ENCODE measurements at regions of chr6 and their contacts with region 1.

Region 1: DNA sequence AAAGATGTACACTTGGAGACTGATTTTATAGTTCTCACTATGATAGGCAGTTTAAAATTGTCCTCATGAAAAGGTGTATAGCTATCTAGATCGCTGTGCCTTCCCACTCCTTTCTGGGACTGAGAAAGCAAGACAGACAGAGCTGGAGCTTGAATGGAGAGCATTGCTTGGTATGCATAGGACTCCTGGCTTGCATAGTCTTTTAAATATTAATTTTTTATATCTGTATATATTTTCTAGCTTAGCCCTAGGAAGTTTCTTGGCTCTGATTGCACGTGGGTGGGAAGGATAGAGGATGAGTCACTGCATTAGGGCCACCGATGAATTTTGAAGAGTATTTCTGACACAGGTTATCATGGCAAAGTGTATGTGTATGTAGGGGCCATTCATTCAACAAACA is 150.0 kb upstream of the SPACA1 start:
- DNase-seq: no peak
- H3K4me3 ChIP-seq: no peak overlapping the region
- H3K27ac ChIP-seq: no peak overlapping the region
- H3K4me1 ChIP-seq: peaks cover 56% of the 10 kb centered on the region
- CTCF ChIP-seq: no peak

Region 2: DNA sequence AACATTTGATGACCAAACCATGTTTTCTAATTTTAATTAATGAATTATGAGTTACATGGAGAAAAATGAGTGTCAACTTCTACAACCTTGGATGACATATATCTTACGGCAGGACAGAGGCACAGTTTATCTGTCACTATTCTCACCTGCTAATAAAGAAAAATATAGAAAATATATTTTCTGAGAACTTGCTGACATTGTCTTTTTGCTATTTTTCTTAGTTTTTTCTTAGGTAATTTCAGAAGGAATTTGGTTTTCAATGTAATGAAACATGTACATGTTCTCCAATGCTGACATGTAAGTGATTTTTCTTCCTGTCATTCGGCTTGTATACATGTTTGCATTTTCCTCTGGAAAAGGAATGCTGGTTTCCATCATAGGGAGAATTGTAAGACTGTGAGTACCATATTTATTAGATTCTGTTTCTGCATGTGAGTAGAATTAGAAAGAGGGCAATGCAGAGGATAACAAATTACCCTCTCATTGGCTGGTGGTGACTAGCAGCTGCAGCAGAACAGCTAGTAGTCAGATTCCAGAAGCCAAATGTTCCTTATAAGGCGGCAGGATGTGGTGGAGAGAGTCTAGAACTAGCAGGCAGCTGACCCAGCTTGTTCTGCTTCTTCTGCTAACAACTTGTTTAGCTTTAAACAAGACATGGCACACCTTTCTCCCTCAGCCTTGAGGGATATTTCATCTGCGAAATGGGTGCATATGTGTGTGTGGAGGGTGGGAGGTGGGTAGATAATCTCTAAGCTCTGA is 17.2 kb after region 1 on chr6:
- CTCF ChIA-PET with region 1: interaction called, 3 read pairs
- POLR2A ChIA-PET with region 1: interaction called, 49 read pairs
- intact Hi-C with region 1: no loop called
- DNase-seq: peak; percentile 58
- H3K4me3 ChIP-seq: no peak overlapping the region
- H3K27ac ChIP-seq: peak overlapping the region; percentile 99
- H3K4me1 ChIP-seq: peaks cover 95% of the 10 kb centered on the region
- CTCF ChIP-seq: no peak

Region 3: DNA sequence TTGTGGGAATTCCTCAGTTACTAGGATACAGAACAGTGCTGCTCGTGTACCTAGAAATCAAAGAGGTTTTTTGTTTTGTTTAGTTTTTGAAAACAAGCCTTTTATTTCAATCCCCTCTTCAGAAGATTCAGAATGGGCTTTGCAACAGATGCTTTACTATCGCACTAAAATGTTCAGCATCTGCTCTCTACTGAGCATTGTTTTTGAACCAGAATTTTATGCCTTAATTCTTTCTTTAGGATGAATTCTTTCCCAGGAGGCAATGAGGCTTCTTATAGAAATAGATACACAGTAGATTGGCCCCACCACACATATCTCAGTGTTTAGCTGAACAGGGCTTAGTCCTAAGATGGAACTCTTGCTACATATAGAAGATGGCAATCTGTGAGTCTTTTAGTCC is 54.1 kb after region 1 on chr6:
- CTCF ChIA-PET with region 1: no interaction called
- POLR2A ChIA-PET with region 1: no interaction called
- intact Hi-C with region 1: no loop called
- DNase-seq: no peak
- H3K4me3 ChIP-seq: no peak overlapping the region
- H3K27ac ChIP-seq: no peak overlapping the region
- H3K4me1 ChIP-seq: no peaks in the 10 kb centered on the region
- CTCF ChIP-seq: no peak